ENCODE measurements at regions of chr22 and their contacts with region 1.

Region 1: GRCh38 chr22:31148953-31149627 is 8.8 kb upstream of the PLA2G3 start:
- DNase-seq: no peak
- ATAC-seq: peak; percentile 96

Region 2: DNA sequence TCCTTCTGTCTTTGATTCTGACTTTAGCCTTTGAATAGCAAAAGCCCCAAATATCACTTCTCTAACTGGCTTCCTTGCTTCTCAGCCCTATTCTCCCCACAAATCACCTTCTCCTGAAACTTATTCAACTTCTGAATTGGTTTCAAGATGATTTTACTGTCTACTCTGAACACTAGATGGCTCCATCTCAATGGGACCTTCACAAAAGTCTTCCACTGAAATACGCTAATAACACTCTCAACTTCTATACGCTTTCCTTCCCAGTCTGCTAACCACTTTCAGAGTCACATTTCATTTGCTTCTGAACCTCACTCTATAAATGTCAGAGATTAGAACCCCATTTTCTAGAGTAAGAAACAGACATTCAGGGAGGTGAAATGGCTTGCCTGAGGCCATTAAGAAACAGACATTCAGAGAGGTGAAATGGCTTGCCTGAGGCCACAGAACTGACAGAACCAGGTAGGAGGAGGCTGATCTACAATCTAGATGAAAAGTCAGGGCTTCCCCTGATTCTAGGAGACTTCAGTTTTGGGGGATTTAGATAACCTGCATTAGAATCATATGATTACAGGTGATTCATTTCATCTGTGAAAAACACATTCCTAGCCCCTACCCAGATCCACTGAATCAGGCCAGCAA is 201.2 kb before region 1 on chr22:
- intact Hi-C with region 1: loop called (anchors 2 kb)
- DNase-seq: no peak
- ATAC-seq: peak; percentile 61

Region 3: DNA sequence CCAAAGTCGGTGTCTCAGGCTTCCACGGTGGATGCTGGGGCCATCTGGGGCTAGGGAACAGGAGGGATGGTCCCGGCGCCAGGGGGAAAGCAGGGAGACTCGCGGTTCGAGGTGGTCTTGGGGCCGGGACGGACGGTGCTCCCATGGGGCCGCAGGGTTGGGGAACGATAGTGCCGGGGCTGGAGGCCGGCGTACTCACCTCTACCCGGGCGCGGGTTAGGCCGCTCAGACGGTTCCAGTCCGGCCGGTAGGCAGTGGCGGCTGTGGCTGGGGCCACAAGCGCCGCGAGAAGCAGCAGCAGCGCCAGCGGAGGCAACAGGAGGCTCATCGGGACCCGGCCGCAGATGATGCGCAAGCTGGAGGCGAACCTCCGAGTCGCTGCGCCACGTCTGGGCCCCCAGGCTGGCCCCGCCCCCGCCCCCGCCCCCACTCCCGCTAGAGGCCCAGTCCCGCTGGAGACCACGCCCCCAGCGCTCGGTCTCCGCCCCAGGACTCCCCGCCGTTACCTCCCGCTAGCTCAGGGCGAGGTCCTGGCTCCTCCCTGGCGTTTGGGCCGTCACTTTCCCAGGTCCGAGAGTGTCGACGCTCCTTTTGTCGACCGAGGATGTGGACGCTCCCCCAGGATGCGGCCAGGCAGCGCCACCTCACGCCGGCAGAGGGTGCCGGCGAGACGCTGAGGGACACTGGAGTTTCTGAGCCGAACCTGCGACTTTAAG is 41.8 kb before region 1 on chr22 and contains the start of gene SELENOM:
- intact Hi-C with region 1: loop called (anchors 1 kb)
- DNase-seq: peak; percentile 96
- ATAC-seq: peak; percentile 95
- total RNA-seq, gene SELENOM: 48.2 TPM

Region 4: DNA sequence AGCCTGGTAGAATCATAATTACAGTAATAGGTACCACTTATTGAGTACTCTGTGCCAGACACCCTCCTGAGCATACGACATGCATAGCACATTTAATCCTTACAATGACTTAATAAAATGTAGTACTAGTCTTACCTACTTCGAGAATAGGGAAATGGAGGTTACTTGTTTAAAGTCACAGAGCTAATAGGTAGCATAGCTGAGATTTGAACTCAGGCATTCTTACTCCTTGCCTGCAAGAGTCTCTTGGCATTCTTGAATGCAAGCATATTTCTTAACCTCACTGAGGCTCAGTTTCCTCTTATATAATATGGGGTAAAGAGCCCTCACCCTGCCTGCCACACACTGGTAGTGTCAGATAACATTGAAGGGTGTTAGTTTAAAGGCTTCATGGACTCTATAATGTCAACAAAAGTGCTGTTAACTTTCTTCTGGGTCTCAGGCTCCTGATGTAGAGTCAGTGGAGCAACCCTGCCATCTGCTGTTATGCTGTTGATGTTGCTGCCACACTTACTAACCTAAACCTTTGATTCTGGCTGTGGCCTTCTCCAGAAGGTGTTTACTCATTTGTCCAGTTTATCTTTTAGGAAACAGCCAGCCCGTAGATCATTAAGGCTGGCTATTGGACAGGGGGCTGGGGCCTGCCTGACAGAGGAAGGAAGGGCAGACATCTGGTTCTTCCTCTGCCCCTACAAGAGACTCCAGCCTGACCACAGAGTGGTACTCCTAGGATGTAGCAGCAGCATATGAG is 82.0 kb after region 1 on chr22:
- intact Hi-C with region 1: loop called (anchors 5 kb)
- DNase-seq: no peak
- ATAC-seq: peak; percentile 68

Region 5: GRCh38 chr22:31846161-31847115 is 697.3 kb after region 1 on chr22:
- intact Hi-C with region 1: no loop called
- DNase-seq: no peak
- ATAC-seq: no peak